SK-N-SH (cell line): ENCODE measurements at regions of chr3 and their contacts with region 1.

Region 1: DNA sequence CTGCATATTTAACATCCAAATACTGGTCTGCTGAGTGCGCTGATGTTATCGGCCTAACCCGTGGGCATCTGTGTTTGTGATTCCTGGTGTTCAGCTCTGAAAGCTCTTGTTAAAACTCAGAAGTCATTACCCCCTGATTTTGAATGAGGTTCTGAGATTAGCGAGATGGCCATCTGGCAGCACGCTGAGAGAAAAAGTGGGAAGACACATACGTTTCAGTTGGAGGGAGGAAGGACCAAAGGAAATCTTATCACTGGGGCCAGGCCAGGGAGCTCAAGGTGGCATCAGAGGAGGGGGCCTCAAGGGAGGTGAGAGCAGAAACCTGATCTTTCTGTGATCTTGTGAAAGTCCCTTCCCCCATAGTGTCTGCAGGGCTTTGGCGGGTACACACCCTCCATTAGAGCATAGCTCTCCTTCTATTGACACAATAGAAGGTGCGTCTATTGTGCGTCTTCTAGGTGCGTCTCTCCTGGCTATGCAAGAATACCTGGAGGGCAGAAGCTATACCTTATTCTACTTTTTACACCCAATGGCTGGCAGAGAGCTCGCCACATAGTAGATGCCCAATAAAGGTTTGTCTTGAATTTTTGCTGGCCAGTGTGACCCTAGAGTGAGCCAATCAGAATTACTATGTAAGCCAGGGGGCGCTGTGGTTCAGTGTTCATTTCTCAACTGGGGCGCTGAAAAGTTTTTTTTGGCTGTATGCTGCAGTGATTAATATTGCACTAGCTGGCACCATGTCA is 182.4 kb downstream of the SHQ1 start:
- DNase-seq: peak; percentile 82
- H3K4me3 ChIP-seq: no peak overlapping the region; a peak in 1 of 4 replicates
- H3K27ac ChIP-seq: peak overlapping the region in 1 of 2 experiments; percentile 98; a peak in 2 of 4 replicates
- H3K4me1 ChIP-seq: peaks cover 0 to 35% of the 10 kb centered on the region in 2 experiments; a peak in 2 of 4 replicates
- H3K27me3 ChIP-seq: no peaks in the 10 kb centered on the region
- CTCF ChIP-seq: peak; percentile 68
- EP300 ChIP-seq: peak in 1 of 2 experiments; percentile 99; a peak in 2 of 4 replicates
- RAD21 ChIP-seq: peak; percentile 81

Region 2: GRCh38 chr3:71875461-71875947 is 790.4 kb before region 1 on chr3:
- CTCF ChIA-PET with region 1: interaction called, 28 read pairs
- POLR2A ChIA-PET with region 1: no interaction called
- DNase-seq: peak; percentile 84
- H3K4me3 ChIP-seq: no peak overlapping the region; a peak in 1 of 4 replicates
- H3K27ac ChIP-seq: no peak overlapping the region; a peak in 1 of 4 replicates
- H3K4me1 ChIP-seq: peaks cover 0 to 11% of the 10 kb centered on the region in 2 experiments; a peak in 1 of 4 replicates
- H3K27me3 ChIP-seq: peaks cover 6% of the 10 kb centered on the region; the same call in 1 of the 2 replicates
- CTCF ChIP-seq: peak; percentile 85
- EP300 ChIP-seq: peak in 1 of 2 experiments; percentile 86; a peak in 2 of 4 replicates
- RAD21 ChIP-seq: peak; percentile 97

Region 3: DNA sequence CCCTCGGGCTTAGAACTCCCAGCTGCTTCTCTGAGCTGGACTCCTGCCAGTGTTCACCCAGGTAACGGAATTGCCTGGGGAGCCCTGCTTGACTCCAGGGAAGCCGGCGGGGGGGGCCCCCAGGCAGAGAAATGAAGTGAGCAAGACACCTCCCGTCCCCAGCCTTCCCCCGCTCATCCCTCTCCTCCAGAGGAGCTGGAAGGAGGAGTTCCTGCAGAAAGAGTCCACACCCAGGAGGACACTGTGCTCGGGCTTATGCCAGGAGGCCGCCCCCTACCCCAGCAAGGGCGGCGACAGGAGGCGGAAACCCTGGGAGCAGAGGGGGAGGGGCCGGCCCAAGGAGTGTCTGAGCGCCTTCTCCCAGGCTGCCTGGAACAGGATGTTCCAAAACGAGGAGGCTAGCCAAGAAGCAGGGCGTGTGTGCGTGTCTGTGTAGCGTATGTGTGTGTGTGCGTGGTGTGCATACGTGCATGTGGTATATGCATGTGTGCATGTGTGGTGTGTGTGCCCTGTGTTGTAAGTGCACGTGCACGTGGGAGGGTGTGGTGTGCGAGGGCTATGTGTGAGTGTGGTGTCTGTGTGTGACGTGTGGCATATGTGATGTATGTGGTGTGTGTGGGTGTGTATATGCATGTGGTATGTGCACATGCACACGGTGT is 328.9 kb before region 1 on chr3:
- CTCF ChIA-PET with region 1: interaction called, 12 read pairs
- POLR2A ChIA-PET with region 1: no interaction called
- DNase-seq: peak; percentile 70
- H3K4me3 ChIP-seq: no peak overlapping the region
- H3K27ac ChIP-seq: no peak overlapping the region; a peak in 1 of 4 replicates
- H3K4me1 ChIP-seq: peaks cover 5 to 44% of the 10 kb centered on the region in 2 experiments; a peak in 2 of 4 replicates
- H3K27me3 ChIP-seq: peaks cover 11% of the 10 kb centered on the region; the same call in 1 of the 2 replicates
- CTCF ChIP-seq: no peak
- EP300 ChIP-seq: no peak
- RAD21 ChIP-seq: no peak

Region 4: GRCh38 chr3:72515941-72516340 is 149.9 kb before region 1 on chr3:
- CTCF ChIA-PET with region 1: interaction called, 12 read pairs
- POLR2A ChIA-PET with region 1: interaction called, 3 read pairs
- DNase-seq: no peak
- H3K4me3 ChIP-seq: no peak overlapping the region
- H3K27ac ChIP-seq: no peak overlapping the region
- H3K4me1 ChIP-seq: peaks cover 0 to 7% of the 10 kb centered on the region in 2 experiments; a peak in 2 of 4 replicates
- H3K27me3 ChIP-seq: no peaks in the 10 kb centered on the region
- CTCF ChIP-seq: no peak
- EP300 ChIP-seq: no peak
- RAD21 ChIP-seq: no peak

Region 5: DNA sequence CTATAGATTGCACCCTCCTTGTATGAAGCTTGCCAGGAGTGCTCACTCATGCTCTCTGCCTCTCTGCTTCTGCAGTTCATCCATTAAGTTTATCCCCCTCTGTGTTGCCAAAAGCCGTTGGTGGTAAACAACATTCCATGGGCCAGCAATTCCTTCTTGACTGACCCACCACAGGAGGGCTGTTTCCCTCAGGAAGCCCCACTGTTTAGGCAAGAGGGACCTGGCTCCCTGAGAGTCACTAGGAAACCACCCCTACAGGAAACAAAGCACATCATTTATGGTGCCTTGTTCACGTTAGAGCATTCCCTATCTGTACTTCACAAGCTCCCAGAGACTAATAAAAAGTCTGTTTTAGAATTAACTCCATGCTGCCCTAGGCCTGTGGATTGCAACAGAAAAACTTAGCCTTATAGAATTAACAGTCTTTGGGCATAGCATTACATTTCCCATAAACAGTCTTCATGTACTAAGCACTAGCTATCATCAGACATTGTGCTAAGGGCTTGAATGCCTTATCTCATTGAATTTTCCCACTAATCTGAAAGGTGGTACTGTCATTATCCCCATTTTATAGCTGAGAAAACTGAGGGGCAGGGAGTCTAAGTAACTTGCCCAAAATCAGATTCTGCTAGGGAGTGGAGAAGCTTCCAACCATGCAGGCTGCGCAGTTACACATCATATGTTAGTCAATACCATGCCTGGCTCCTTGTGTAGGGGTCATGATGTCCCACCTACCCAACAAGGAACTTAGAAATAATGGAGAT is 32.5 kb after region 1 on chr3:
- CTCF ChIA-PET with region 1: interaction called, 10 read pairs
- POLR2A ChIA-PET with region 1: no interaction called
- DNase-seq: no peak
- H3K4me3 ChIP-seq: no peak overlapping the region
- H3K27ac ChIP-seq: no peak overlapping the region
- H3K4me1 ChIP-seq: peaks cover 0 to 5% of the 10 kb centered on the region in 2 experiments; a peak in 1 of 4 replicates
- H3K27me3 ChIP-seq: no peaks in the 10 kb centered on the region; the same call in 1 of the 2 replicates
- CTCF ChIP-seq: no peak
- EP300 ChIP-seq: no peak
- RAD21 ChIP-seq: no peak

Region 6: DNA sequence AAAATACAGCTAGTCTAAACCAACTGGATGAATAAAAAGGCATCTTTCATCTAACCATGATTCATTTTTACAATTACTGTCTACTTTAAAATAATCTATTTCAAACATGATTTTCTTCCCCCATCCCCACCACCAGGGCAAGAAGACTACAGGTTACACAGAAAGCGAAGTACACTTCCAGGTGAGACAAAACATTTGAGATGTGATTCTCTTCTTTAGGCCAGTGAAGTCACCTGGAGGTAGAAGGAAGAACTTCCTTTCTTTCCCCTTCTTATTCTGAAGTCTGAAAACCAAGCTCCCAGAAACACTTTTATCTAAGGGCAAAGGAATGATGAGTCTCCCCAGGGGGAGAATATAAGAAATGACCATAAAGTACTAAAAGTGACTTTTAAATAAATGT is 145.7 kb after region 1 on chr3:
- CTCF ChIA-PET with region 1: interaction called, 24 read pairs
- POLR2A ChIA-PET with region 1: no interaction called
- DNase-seq: no peak
- H3K4me3 ChIP-seq: no peak overlapping the region
- H3K27ac ChIP-seq: no peak overlapping the region
- H3K4me1 ChIP-seq: no peaks in the 10 kb centered on the region
- H3K27me3 ChIP-seq: no peaks in the 10 kb centered on the region
- CTCF ChIP-seq: no peak
- EP300 ChIP-seq: no peak
- RAD21 ChIP-seq: no peak